OCI-LY7 (cell line): ENCODE measurements at regions of chr5 and their contacts with region 1.

Region 1: DNA sequence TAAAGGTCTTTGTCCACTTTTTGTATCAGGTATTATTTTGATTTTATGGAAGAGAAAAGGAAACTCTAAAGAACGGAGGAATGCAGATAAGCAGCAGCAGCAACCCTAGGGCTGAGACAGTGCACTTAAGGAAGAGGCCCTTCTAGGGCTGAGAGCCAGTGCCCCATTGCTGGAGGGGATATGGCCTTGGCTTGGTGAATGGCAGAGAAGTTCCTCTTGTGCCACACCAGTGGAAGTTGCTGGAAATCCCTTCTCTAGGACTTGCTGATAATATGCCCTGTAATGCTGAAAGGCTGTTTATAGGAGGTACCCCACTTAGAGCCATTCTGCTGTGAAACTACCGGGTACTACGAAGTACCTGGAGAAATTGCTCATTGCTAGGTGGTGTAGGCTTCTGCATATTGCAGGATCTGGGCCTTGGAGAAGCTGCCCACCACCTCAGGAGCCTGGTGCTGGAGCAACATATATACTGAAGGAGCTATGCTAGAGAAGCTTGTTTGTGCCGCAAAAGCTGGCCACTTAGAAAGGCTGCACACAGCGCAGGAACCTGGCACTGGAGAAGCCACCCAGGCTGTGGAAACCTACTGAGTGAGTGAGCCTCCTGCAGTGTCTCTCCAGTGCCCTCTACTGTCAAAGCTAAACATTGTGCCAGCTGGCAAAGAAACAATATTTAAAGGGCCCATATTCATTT is 9.6 kb upstream of the UBTD2 start:
- DNase-seq: peak; percentile 77
- H3K4me3 ChIP-seq: no peak overlapping the region
- H3K27ac ChIP-seq: no peak overlapping the region
- H3K4me1 ChIP-seq: no peaks in the 10 kb centered on the region
- CTCF ChIP-seq: peak; percentile 97

Region 2: GRCh38 chr5:171913987-171914273 is 379.3 kb before region 1 on chr5:
- CTCF ChIA-PET with region 1: no interaction called
- POLR2A ChIA-PET with region 1: no interaction called
- intact Hi-C with region 1: loop called (anchors 5 kb)
- DNase-seq: no peak
- H3K4me3 ChIP-seq: no peak overlapping the region
- H3K27ac ChIP-seq: no peak overlapping the region
- H3K4me1 ChIP-seq: peaks cover 5% of the 10 kb centered on the region
- CTCF ChIP-seq: no peak

Region 3: DNA sequence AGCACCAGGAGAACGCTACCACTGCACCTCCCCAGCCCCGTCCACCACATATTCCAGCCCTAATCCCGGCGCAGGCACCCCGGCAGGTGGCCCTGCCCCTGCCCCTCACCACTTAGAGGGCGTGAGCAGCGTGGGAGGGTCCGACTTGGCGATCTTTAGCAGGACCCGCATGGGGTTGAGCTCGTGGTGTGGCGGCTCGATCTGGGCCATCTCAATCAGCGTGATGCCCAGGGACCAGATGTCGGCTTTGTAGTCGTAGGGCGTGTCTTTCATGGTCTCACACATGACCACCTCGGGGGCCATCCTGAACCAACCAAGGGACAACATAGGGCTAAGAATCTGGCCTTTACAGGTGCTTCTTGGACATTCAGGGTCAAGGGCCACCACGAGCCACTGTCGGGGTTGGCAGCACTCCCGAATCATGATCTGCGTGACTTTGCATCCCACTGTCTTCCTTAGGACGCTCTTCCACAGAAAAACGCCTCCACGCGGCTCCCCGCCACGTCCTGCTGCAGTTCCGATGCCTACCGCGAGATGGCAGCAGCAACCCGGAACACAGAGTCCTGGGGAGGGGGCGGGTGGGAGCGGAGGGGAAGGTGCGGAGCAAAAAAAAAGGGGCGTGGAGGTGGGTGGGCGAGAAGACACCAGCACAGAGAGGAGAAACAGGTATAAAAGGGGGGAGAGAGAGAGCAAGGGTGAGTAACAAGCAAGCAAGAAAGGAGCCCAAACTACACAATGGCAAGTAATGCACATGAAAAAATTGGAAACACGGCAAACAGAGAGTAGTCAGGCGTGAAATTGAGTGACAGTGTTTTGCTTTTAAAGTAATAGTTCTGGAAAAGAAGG is 186.5 kb before region 1 on chr5:
- CTCF ChIA-PET with region 1: no interaction called
- POLR2A ChIA-PET with region 1: interaction called, 3 read pairs
- intact Hi-C with region 1: loop called (anchors 2 kb)
- DNase-seq: peak; percentile 57
- H3K4me3 ChIP-seq: peak overlapping the region; percentile 35
- H3K27ac ChIP-seq: no peak overlapping the region
- H3K4me1 ChIP-seq: peaks cover 31% of the 10 kb centered on the region
- CTCF ChIP-seq: peak; percentile 96

Region 4: GRCh38 chr5:172312286-172312685 is 19.1 kb after region 1 on chr5:
- CTCF ChIA-PET with region 1: no interaction called
- POLR2A ChIA-PET with region 1: no interaction called
- intact Hi-C with region 1: no loop called
- DNase-seq: no peak
- H3K4me3 ChIP-seq: no peak overlapping the region
- H3K27ac ChIP-seq: no peak overlapping the region
- H3K4me1 ChIP-seq: no peaks in the 10 kb centered on the region
- CTCF ChIP-seq: no peak